ENCODE measurements at regions of chr9 and their contacts with region 1.

Region 1: DNA sequence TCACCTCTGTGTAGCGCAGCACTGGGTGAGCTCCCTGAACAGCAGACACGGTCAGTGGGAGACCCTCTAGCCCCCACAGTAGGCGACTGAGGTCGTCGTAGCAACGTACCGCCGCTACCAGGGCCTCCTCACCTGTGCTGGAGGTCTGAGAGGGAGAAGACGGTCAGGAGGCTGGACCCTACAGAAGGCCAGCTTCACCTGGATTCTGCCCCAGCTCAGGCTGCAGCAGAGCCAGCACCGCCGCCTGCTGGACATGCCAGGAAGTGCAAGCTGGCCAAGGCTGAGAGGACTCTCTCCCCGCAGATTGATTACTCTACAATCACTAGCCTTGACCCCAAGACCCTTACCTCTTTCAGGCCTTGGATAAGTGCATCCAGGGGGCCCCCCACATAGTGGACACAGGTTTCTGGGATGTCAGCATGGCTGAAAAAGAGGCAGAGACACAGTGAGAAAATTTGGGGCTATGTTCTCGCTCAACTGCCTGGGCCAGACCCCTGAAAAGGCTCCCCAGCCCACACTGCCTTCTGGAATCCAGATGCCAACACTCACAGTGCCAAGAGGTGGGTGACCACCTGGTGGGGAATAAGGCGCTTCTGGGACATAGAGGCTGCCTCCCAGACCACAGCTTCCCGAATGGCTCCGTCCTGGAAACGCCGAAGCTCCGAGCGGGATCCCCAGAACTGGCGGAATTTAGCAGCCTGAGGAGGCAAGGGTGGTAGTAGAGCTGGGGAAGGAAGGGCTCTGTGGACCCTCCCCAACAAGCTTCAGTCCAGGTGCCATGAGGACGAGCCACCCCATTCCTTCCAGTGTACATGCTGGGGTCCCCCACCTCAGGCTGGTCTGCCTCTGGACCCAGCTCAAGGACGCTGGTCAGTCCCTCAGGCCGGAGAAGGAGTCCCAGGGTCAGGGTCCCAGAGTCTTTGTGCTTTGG is 6.9 kb downstream of the NOL6 start:
- DNase-seq: peak; percentile 79
- H3K4me3 Mint-ChIP-seq: no peak overlapping the region
- H3K27ac Mint-ChIP-seq: no peak overlapping the region
- H3K4me1 Mint-ChIP-seq: peaks cover 9% of the 10 kb centered on the region
- H3K27me3 Mint-ChIP-seq: no peaks in the 10 kb centered on the region

Region 2: GRCh38 chr9:33187519-33188218 is 279.2 kb before region 1 on chr9:
- CTCF ChIA-PET with region 1: no interaction called
- POLR2A ChIA-PET with region 1: no interaction called
- DNase-seq: no peak
- H3K4me3 Mint-ChIP-seq: no peak overlapping the region
- H3K27ac Mint-ChIP-seq: no peak overlapping the region
- H3K4me1 Mint-ChIP-seq: no peaks in the 10 kb centered on the region
- H3K27me3 Mint-ChIP-seq: peaks cover 4% of the 10 kb centered on the region

Region 3: GRCh38 chr9:33374634-33375213 is 92.1 kb before region 1 on chr9:
- CTCF ChIA-PET with region 1: interaction called, 91 read pairs
- POLR2A ChIA-PET with region 1: interaction called, 9 read pairs
- DNase-seq: peak; percentile 70
- H3K4me3 Mint-ChIP-seq: no peak overlapping the region
- H3K27ac Mint-ChIP-seq: peak overlapping the region; percentile 33
- H3K4me1 Mint-ChIP-seq: peaks cover 14% of the 10 kb centered on the region
- H3K27me3 Mint-ChIP-seq: no peaks in the 10 kb centered on the region

Region 4: GRCh38 chr9:33404788-33405362 is 62.0 kb before region 1 on chr9:
- CTCF ChIA-PET with region 1: interaction called, 65 read pairs
- POLR2A ChIA-PET with region 1: interaction called, 11 read pairs
- DNase-seq: no peak
- H3K4me3 Mint-ChIP-seq: no peak overlapping the region
- H3K27ac Mint-ChIP-seq: no peak overlapping the region
- H3K4me1 Mint-ChIP-seq: peaks cover 10% of the 10 kb centered on the region
- H3K27me3 Mint-ChIP-seq: no peaks in the 10 kb centered on the region

Region 5: DNA sequence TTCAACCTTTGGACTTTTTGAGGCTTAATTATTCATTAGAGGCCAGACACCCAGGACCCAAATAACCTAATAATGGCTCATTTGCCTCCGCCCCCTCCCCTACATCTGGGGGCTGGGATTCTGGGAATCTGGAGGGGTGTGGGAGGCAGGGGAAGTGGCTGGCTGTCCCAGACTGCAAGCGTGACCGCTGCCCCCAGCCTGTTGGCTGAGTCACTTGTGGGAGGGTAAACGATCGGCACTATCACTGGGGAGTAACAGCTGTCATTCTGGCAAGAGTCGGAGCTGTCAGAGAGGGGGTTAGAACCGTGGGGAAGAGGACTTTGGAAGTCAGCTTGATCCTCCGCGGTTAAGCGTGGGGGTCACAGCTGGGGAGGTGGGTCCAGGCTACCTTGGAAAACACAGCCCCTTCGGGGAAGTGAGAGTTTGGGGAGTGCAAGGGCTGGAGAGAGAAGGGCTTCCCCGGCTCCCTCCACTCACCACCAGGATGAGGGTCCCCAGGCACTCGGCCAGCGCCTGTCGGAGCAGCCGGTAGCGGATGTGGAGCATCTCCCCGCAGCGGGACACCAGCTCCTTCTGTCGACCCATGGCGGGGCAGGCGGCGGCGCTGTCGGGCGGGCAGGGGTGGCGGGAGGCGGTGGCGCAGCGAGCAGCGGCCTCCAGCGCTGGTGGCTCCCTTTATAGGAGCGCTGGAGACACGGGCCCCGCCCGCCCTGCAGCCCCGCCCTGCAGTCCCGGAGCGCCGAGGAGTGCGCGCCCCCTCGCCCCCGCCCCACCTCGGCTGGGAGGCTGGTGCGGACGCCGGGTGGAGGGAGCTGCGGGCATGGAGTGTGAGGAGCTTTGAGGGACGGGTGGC is 19.7 kb before region 1 on chr9 and contains the start of gene AQP3:
- CTCF ChIA-PET with region 1: interaction called, 189 read pairs
- POLR2A ChIA-PET with region 1: interaction called, 24 read pairs
- DNase-seq: peak; percentile 85
- H3K4me3 Mint-ChIP-seq: peak within 1 kb of the TSS; percentile 84
- H3K27ac Mint-ChIP-seq: peak within 1 kb of the TSS; percentile 94
- H3K4me1 Mint-ChIP-seq: peaks cover 64% of the 10 kb centered on the region
- H3K27me3 Mint-ChIP-seq: no peaks in the 10 kb centered on the region
- total RNA-seq, gene AQP3: 162 to 167 TPM

Region 6: DNA sequence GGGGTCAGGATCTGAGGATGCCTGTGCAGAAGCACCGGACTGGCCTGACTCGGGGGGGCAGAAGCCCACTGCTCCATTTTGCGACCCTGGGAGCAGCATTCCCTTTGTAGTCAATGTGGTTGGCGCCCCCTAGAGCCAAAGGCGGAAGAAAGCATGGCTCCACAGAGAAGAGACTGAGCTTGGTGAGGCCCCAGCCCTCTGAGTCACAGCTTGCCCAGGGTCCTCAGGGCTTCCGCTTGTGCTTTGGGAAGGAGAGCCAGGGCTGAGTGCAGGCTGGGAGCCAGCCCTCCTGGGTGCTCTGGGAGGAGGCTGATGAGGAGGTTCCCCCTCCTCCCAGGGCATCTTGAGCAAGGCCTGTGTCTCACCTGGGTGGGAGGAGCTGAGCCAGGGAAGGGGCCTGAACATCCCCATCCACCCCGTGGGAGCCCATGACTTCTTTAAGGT is 14.0 kb before region 1 on chr9:
- CTCF ChIA-PET with region 1: interaction called, 189 read pairs
- POLR2A ChIA-PET with region 1: interaction called, 40 read pairs
- DNase-seq: peak; percentile 64
- H3K4me3 Mint-ChIP-seq: peak overlapping the region; percentile 2
- H3K27ac Mint-ChIP-seq: peak overlapping the region; percentile 82
- H3K4me1 Mint-ChIP-seq: peaks cover 63% of the 10 kb centered on the region
- H3K27me3 Mint-ChIP-seq: no peaks in the 10 kb centered on the region

Region 7: DNA sequence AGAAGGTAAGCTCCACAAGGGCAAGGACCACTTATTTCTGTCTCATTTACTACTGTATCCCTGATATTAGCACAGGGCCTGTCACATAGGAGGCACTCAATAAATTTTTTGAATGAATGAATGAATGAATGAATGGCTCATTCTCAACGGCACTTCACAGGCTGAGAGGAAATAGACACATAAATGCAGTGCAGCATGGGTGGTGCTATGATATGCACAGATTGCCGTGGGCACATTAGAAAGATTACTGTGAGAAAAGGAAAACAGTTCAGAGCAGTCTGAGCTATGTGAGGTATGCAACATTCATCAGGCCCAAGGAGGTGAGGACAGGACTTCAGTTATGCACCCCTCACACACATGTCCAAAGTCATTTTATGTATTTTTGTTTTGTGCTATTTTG is 13.3 kb after region 1 on chr9:
- CTCF ChIA-PET with region 1: interaction called, 12 read pairs
- POLR2A ChIA-PET with region 1: no interaction called
- DNase-seq: no peak
- H3K4me3 Mint-ChIP-seq: no peak overlapping the region
- H3K27ac Mint-ChIP-seq: no peak overlapping the region
- H3K4me1 Mint-ChIP-seq: peaks cover 2% of the 10 kb centered on the region
- H3K27me3 Mint-ChIP-seq: no peaks in the 10 kb centered on the region

Region 8: GRCh38 chr9:33524306-33524947 is 57.6 kb after region 1 on chr9:
- CTCF ChIA-PET with region 1: no interaction called
- POLR2A ChIA-PET with region 1: no interaction called
- DNase-seq: peak; percentile 21
- H3K4me3 Mint-ChIP-seq: peak overlapping the region; percentile 78
- H3K27ac Mint-ChIP-seq: no peak overlapping the region
- H3K4me1 Mint-ChIP-seq: peaks cover 8% of the 10 kb centered on the region
- H3K27me3 Mint-ChIP-seq: peaks cover 67% of the 10 kb centered on the region

Measured in activated CD4-positive, alpha-beta memory T cell treated with anti-CD3 and anti-CD28 coated beads, Interleukin-2, amount 10 ng/mL, durations not matched to agents 7 days and 5 days (primary cell).